T-cell (primary cell): ENCODE measurements at regions of chr3 and their contacts with region 1.

Region 1: GRCh38 chr3:111428301-111428700 is 113.7 kb upstream of the CD96 start:
- DNase-seq: no peak
- ATAC-seq: no peak
- H3K4me3 ChIP-seq: no peak overlapping the region
- H3K4me3 Mint-ChIP-seq: no peak overlapping the region
- H3K27ac ChIP-seq: no peak overlapping the region
- H3K27ac Mint-ChIP-seq: no peak overlapping the region
- H3K4me1 ChIP-seq: no peaks in the 10 kb centered on the region
- H3K4me1 Mint-ChIP-seq: no peaks in the 10 kb centered on the region
- H3K27me3 ChIP-seq: no peaks in the 10 kb centered on the region
- H3K27me3 Mint-ChIP-seq: no peaks in the 10 kb centered on the region

Region 2: DNA sequence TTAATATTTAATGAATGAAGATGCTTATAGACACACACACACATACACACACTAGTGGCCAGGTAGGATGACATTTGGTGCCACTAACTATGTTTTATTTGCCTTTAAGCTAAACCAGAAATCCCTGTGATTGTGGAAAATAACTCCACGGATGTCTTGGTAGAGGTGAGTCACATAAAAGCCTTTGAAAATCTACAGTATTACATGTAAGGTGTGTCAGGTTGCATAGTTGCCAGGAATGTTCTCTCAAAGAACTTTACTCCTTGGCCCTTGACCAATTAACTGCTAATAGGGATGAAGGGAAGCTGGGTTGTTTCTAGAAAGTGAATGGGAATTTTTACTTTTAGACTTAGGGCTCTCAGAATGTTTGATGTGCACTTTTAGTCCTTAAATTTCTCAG is 156.9 kb after region 1 on chr3:
- CTCF ChIA-PET with region 1: interaction called in 1 of 2 experiments, 10 read pairs
- POLR2A ChIA-PET with region 1: no interaction called
- DNase-seq: no peak
- ATAC-seq: no peak
- H3K4me3 ChIP-seq: no peak overlapping the region
- H3K4me3 Mint-ChIP-seq: no peak overlapping the region
- H3K27ac ChIP-seq: no peak overlapping the region
- H3K27ac Mint-ChIP-seq: no peak overlapping the region
- H3K4me1 ChIP-seq: no peaks in the 10 kb centered on the region
- H3K4me1 Mint-ChIP-seq: peaks cover 44 to 55% (median 47%) of the 10 kb centered on the region in 3 donors
- H3K27me3 ChIP-seq: no peaks in the 10 kb centered on the region
- H3K27me3 Mint-ChIP-seq: no peaks in the 10 kb centered on the region